ENCODE measurements at regions of chr6 and their contacts with region 1.

Region 1: DNA sequence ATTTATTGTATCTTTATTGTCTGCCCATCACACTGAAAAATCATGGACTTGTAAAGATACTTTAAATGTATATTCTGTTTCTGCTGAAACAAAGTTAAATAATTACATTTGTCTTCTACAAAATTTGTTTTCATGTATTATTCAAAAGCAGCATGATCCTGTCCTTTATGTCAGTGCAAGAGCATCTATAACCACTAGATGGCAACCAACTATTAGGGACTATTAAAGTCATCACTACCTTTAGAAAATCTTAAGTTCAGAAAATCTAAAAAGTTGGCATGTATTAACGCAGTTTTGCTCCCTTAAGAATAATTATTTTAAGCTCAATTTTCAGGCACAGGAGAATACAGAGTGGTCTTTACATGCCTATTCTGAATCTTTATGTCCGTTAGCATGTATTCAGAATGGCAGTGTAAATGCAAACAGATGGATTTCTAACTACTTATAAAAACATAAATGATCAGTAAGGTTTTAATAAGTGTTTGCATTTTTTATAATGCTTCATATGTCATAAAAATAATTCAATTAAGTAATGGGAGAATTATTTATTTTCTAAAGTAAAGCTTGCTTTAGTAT is 17.8 kb downstream of the TMEM30A start:
- DNase-seq: peak; percentile 50
- H3K4me3 ChIP-seq: no peak overlapping the region
- H3K27ac ChIP-seq: no peak overlapping the region
- H3K4me1 ChIP-seq: peaks cover 16% of the 10 kb centered on the region
- H3K27me3 ChIP-seq: no peaks in the 10 kb centered on the region
- CTCF ChIP-seq: peak; percentile 79 to 87

Region 2: GRCh38 chr6:75284632-75285286 is 18.0 kb after region 1 on chr6 and contains the start of gene TMEM30A:
- CTCF ChIA-PET with region 1: interaction called, 3 read pairs
- dilution Hi-C with region 1: no loop called
- in situ Hi-C with region 1: no loop called
- intact Hi-C with region 1: loop called (anchors 2 kb)
- DNase-seq: peak; percentile 99
- H3K4me3 ChIP-seq: peak within 1 kb of the TSS; percentile 73 to 96 (median 93)
- H3K27ac ChIP-seq: peak within 1 kb of the TSS; percentile 76
- H3K4me1 ChIP-seq: peaks cover 10% of the 10 kb centered on the region
- H3K27me3 ChIP-seq: no peaks in the 10 kb centered on the region
- CTCF ChIP-seq: no peak
- total RNA-seq, gene TMEM30A: 73.1 to 127 TPM

Region 3: DNA sequence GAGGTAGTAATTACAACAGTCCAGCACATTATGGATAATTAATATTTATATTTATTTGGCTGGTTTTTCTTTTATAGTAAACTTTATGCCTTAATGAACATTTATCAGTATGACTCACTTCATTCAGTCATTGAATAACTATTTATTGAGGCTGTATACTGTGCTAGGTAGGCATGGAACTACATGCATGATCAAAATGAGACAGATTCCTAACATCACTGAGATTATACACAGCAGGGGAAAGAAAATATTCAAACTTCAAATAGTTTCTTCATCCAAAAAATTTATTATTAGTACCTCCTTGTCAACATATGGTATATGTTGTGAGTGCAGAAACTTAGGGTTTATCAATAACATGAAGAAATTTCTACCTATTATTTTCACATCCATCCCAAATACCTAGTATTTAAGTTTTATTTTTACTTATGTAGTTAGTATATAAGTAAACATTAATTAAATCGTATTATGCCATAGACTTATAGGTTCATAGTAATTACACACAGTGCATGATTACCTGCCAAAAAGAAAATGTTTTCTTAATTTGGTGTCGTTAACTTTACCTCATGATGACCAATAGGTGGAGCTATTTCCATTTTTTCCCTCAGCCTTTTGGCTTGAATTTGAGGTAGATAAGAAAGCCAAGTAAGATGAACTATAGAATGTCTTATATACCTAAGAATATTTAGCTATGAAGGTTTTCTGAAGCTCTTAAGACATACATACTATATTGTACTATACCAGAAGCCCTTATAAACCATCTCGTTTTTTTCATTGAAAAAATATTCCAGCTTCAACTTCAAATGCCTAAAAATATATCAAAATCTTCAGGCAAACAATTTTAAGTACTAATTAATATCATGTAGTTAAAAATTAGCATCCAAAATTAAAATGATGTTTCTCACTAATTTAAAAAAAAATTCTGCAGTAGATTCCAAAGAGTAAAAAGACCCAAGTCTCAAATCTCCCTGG is 30.3 kb after region 1 on chr6:
- CTCF ChIA-PET with region 1: no interaction called
- dilution Hi-C with region 1: no loop called
- in situ Hi-C with region 1: no loop called
- intact Hi-C with region 1: loop called (anchors 1 kb)
- DNase-seq: peak; percentile 38
- H3K4me3 ChIP-seq: no peak overlapping the region
- H3K27ac ChIP-seq: no peak overlapping the region
- H3K4me1 ChIP-seq: no peaks in the 10 kb centered on the region
- H3K27me3 ChIP-seq: no peaks in the 10 kb centered on the region
- CTCF ChIP-seq: peak; percentile 68

Region 4: GRCh38 chr6:75308250-75308988 is 41.6 kb after region 1 on chr6:
- CTCF ChIA-PET with region 1: no interaction called
- dilution Hi-C with region 1: no loop called
- in situ Hi-C with region 1: no loop called
- intact Hi-C with region 1: no loop called
- DNase-seq: no peak
- H3K4me3 ChIP-seq: no peak overlapping the region
- H3K27ac ChIP-seq: no peak overlapping the region
- H3K4me1 ChIP-seq: no peaks in the 10 kb centered on the region
- H3K27me3 ChIP-seq: no peaks in the 10 kb centered on the region
- CTCF ChIP-seq: no peak

Region 5: DNA sequence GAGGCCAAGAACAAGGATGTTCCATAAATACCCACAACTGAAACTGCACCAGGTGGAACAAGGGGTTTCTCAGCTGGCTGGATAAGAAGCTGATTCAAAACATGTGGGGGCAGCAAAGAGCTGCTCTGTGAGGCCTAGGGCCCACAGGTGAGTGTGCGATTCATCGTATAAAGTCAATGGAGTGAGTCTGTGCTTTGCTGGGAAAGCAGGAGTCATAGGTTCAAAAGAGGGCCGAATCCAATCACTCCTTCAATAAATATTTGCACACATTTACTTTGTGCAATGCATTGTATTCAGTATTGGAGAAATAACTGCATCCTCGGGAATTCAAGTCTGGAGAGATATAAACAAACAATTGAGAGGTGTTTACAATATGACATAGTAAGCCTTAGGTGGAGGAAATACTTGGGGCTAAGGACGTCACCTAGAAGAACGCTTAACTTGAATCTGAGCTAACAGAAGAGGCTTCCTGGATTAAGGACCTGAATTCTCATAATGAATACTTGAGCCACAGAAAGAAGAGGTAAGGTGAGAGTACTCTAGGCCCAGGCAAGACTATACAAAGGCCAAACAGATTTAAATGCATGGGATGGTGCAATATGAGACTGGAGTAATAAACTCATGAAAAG is 101.5 kb after region 1 on chr6:
- CTCF ChIA-PET with region 1: interaction called, 4 read pairs
- dilution Hi-C with region 1: no loop called
- in situ Hi-C with region 1: no loop called
- intact Hi-C with region 1: loop called (anchors 10 kb)
- DNase-seq: peak; percentile 46
- H3K4me3 ChIP-seq: no peak overlapping the region
- H3K27ac ChIP-seq: no peak overlapping the region
- H3K4me1 ChIP-seq: no peaks in the 10 kb centered on the region
- H3K27me3 ChIP-seq: peaks cover 2% of the 10 kb centered on the region
- CTCF ChIP-seq: peak; percentile 60 to 64

Measured in mammary epithelial cell (primary cell).